Posterior cingulate gyrus (tissue), 11 donors: ENCODE measurements at regions of chr17 and their contacts with region 1.

Region 1: DNA sequence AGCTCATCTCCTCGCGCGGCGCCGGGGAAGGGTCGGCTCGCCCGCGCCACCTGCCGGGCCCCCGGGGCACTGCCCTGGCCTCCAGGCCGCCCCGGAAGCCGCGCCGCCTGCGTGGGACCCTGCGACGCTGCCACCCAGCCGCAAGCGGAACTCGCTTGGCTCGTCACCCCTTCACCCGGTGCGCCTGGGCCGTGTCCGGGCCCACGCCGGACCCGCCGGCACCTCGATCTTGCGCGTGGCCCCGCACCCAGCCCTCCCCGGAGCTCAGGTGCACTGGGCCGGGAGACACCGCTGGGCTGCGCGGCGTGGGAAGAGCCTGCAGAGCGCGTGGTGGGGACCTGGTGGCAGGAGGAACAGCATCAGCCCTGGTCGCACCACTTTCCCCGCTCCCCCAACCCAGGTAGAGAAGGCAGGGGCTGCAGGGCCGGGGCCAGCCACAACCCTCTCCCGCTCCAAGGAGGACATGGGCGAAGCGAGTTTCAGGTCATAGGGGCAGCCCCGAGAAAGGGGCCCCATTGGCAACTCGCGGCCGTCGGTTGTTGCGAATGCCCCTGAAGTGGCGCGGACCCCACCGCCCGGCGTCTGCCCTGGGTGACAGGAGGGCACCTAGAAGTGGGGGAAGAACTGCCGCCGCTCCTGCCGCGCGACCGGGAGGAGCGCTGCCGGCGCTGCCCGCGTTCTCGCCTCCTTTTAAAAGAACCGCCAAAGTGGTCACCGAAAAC is 363 bp upstream of the MIF4GD start:
- DNase-seq: peak; percentile 57 to 97 (median 77)

Region 2: GRCh38 chr17:75182569-75183450 is 88.6 kb before region 1 on chr17 and contains the start of gene SUMO2:
- intact Hi-C with region 1: loop called (anchors 2 kb)
- DNase-seq: peak; percentile 81 to 98 (median 87)

Region 3: GRCh38 chr17:75241996-75242460 is 29.4 kb before region 1 on chr17:
- intact Hi-C with region 1: loop called (anchors 2 kb)
- DNase-seq: peak in 2 of 10 donors; percentile 77 to 80

Region 4: GRCh38 chr17:75289115-75289831 is 17.9 kb after region 1 on chr17 and contains the start of gene SLC25A19:
- intact Hi-C with region 1: loop called (anchors 2 kb)
- DNase-seq: peak; percentile 98 to 100 (median 98)

Region 5: GRCh38 chr17:75405365-75406221 is 134.2 kb after region 1 on chr17 and contains the start of gene GRB2:
- intact Hi-C with region 1: loop called (anchors 5 kb)
- DNase-seq: peak; percentile 97 to 100 (median 99)

Region 6: GRCh38 chr17:75498726-75499213 is 227.4 kb after region 1 on chr17:
- intact Hi-C with region 1: no loop called
- DNase-seq: peak in 1 of 10 donors; percentile 66